ENCODE measurements at regions of chr7 and their contacts with region 1.

Region 1: DNA sequence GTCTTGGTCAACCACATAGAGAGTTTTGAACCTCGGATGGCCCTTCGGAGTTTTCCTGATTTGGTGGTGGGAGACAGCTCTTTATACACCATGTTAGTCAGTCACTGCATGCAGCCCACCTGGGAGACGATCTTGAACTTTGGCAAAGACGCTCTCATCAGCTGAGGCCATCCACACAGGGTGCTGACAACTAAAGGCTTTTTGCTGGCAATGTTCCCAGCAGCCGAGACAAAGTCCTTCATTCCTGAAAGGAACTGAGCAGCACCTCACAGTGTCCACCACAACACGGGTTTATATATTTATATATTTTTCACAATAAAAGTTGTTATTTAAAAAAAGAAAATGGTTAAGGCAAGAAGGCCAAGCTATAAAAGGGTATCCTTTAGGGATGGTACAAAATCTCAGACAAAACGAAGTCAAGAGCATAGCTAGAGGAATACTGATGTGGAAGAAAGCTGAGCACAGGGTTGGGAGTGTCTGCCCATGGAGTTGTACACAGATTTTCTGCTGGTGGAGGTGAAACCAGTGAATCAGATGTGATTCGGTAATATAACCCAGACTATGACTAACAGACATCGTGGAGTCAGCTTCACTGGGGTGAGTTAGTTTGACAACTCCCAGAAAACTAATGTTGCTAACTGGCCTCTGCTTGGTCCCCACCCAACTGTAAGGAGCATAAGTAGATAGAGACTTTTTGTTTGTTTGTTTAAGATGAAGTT is 27.4 kb upstream of the CAPZA2 start:
- DNase-seq: peak in 1 of 4 experiments; percentile 30
- ATAC-seq: peak; percentile 22; the same call in 2 of the 3 replicates
- H3K4me3 ChIP-seq: no peak overlapping the region
- H3K27ac ChIP-seq: no peak overlapping the region
- H3K4me1 ChIP-seq: peaks cover 0 to 5% of the 10 kb centered on the region in 2 experiments; a peak in 1 of 5 replicates
- H3K27me3 ChIP-seq: peaks cover 25 to 28% of the 10 kb centered on the region in 2 experiments
- CTCF ChIP-seq: no peak
- EP300 ChIP-seq: no peak
- POLR2A ChIP-seq: no peak
- RAD21 ChIP-seq: no peak

Region 2: GRCh38 chr7:116854132-116854531 is 19.2 kb after region 1 on chr7:
- CTCF ChIA-PET with region 1: no interaction called
- POLR2A ChIA-PET with region 1: interaction called, 12 read pairs
- in situ Hi-C with region 1: no loop called
- intact Hi-C with region 1: no loop called
- DNase-seq: no peak
- ATAC-seq: no peak
- H3K4me3 ChIP-seq: no peak overlapping the region
- H3K27ac ChIP-seq: no peak overlapping the region
- H3K4me1 ChIP-seq: no peaks in the 10 kb centered on the region; a peak in 1 of 5 replicates
- H3K27me3 ChIP-seq: peaks cover 17 to 30% of the 10 kb centered on the region in 2 experiments
- CTCF ChIP-seq: no peak
- EP300 ChIP-seq: no peak
- POLR2A ChIP-seq: no peak
- RAD21 ChIP-seq: no peak

Measured in K562 (cell line).